Breast epithelium (tissue), 4 donors: ENCODE measurements at regions of chr16 and their contacts with region 1.

Region 1: DNA sequence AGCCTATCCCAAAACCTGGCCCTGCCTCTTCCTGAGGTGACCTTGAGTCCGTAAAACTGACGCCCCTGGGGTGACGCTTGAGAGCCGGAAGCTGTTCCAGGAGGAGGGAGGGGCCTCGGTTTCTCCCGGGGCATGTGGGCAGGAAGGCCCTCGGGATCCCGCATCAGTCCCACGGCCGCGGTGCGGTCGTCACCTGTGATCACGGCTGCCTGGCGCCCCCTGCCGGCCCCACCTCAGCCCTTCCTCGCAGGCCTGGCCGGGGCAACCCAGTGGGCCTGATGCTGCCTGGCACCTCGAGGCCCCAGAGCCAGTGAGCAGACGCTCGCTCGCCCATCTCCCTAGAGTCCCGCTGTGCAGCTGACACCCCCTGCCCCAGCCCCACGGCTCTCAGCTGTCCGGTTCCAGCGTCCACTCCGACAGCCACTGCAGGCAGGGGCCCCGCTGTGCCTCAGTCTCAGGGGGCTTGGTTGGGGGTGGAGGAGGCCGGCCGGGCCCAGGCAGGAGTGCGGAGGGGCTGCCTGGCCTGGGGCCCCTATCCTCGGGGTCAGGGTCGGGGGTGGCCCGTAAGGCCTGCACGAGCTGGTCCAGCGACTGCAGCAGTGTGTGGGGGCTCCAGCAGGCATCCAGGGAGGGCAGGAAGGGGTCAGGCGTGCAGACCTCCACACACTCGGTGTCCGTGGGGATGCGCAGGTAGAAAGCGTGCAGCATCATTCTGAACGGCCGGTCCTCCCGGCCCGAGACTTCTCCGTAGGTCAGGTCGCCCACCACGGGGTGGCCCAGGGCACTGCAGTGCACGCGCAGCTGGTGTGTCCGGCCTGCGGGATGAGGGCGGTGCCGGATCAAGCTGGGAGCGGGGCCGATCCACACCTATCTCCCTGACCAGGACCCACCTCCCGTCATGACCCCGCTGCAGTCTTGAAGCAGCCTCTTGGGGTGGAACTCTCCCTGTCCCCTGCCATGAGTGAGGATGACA is 2.3 kb downstream of the RPUSD1 start:
- DNase-seq: peak; percentile 41 to 79
- H3K4me3 ChIP-seq: no peak overlapping the region
- H3K27ac ChIP-seq: no peak overlapping the region
- H3K4me1 ChIP-seq: peaks cover 5 to 11% of the 10 kb centered on the region in 2 donors
- H3K27me3 ChIP-seq: peaks cover 8 to 26% of the 10 kb centered on the region in 2 donors
- CTCF ChIP-seq: peak; percentile 44 to 78 (median 63)
- POLR2A ChIP-seq: no peak

Region 2: DNA sequence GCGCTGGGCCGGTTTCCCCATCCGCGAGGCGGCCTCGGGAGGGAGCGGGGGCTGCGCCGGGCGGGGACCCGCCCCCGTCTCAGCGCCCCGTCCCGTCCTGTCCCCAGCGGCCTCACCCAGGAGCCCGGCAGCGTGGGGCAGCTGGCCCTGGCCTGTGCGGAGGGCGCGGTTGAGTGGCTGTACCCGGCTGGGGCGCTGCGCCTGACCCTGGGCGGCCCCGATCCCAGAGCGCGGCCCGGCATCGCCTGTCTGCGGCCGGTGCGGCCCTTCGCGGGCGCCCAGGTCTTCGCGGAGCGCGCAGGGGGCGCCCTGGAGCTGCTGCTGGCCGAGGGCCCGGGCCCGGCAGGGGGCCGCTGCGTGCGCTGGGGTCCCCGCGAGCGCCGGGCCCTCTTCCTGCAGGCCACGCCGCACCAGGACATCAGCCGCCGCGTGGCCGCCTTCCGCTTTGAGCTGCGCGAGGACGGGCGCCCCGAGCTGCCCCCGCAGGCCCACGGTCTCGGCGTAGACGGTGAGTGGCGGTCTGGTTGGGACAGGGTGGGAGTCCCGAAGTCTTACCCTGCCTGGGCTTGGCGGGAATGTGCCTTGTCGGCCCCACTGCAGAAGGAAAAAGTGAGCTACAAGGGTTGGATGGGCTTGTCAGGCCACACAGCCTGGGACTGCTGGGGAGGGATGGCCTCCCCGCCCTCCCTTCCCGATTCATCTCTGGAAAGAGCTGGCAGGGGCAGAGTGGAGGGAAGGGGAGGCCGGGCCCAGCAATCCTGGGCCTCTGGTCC is 70.2 kb before region 1 on chr16:
- intact Hi-C with region 1: loop called (anchors 2 kb)
- DNase-seq: no peak
- H3K4me3 ChIP-seq: peak overlapping the region; percentile 65 to 96 (median 72)
- H3K27ac ChIP-seq: no peak overlapping the region
- H3K4me1 ChIP-seq: peaks cover 8 to 17% of the 10 kb centered on the region in 2 donors
- H3K27me3 ChIP-seq: peaks cover 6 to 14% of the 10 kb centered on the region in 2 donors
- CTCF ChIP-seq: no peak
- POLR2A ChIP-seq: no peak